ENCODE measurements at regions of chr20 and their contacts with region 1.

Region 1: DNA sequence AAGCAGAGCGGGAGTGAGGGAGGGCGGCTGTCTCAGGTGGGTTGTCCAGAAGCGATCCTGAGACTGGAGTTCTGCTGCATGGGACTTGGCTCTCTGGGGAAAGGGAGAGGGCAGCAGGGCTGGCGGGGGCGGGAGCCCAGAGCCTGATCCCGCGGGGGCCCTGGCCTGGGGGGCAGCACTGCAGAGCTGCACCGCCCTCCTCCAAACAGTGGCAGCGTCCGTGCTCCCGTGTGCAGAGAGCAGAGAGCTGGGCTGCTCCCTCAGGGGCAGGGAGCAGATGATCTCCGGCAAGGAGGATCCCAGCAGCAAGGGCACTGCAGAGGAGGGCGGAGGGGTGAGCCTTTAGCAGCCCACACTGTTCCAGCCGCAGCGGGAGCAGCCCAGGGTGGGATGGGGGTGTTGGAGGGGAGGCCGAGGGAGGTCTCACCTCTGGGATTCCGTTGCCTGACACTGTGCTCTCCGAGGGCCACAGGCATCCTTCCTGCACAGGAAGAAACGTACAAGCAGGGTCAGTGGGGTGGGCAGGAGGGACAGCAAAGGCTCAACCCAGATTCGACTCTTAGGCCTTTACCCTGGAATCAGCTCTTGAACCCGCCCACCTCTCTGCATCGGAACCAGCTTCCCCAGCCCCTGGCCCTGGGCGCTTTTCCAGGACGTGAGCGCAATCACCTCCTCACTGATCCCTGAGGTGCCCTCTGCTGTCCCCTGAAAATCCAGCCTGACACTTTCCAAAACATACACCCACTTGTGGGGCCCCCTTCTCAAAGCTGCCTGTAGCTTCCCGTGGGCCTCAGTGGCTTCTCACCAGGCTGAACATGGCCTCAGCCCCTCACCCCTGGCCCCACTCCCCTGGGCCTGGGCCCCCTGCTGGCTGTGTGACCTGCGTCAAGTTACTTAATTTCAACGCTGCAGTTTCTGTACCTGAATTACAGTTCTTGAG is 32.6 kb upstream of the ZBP1 start:
- DNase-seq: peak in 1 of 2 donors; percentile 38
- H3K4me3 ChIP-seq: no peak overlapping the region
- H3K27ac ChIP-seq: no peak overlapping the region
- H3K4me1 ChIP-seq: no peaks in the 10 kb centered on the region
- H3K27me3 ChIP-seq: no peaks in the 10 kb centered on the region
- CTCF ChIP-seq: no peak
- POLR2A ChIP-seq: no peak

Region 2: DNA sequence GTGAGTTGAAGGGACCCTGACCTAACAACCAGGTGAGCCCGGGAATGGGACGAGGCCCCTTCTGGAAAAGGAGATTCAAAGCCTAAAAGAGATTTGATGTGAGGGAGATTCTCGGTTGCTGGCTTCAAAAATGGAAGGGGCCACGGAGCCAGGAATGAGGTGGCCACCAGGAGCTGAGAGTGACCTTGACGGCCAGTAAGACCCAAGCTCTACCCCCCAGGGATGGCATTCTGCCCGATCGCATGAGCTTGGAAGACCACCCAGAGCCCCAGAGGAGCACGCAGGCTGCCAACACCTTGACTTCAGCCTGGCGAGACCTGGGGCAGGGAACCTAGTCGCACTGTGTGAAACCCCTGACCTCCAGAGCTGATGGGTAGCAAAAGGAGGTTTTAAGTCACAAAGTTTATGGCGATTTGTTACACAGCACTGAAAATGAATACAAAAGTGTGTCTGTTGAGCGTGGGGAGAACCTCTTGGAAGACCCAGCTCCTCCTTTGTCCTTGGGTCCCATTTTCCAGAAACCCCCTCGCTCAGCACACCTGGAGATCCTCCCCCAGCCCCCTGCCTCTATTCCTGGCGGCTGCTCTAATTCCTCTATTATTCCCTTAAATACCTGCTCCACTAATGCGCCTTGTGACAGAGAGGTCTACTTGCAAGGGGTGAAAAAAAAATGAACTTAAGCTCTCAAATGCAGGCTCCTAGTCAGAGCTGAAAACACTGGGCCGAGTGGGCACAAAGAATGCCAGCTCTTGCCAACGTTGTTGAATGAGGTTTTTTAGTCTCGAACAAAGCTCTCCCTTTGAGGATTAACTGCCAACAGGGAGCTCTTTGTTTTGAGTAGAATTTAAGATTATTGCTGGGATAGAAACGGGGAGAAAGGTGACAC is 550.1 kb before region 1 on chr20:
- intact Hi-C with region 1: no loop called
- DNase-seq: peak in 1 of 2 donors; percentile 77
- H3K4me3 ChIP-seq: no peak overlapping the region
- H3K27ac ChIP-seq: peak overlapping the region; percentile 80 to 83
- H3K4me1 ChIP-seq: no peaks in the 10 kb centered on the region
- H3K27me3 ChIP-seq: no peaks in the 10 kb centered on the region
- CTCF ChIP-seq: no peak
- POLR2A ChIP-seq: no peak

Region 3: GRCh38 chr20:57691752-57692151 is 38.9 kb after region 1 on chr20:
- intact Hi-C with region 1: loop called (anchors 1 kb)
- DNase-seq: no peak
- H3K4me3 ChIP-seq: no peak overlapping the region
- H3K27ac ChIP-seq: no peak overlapping the region
- H3K4me1 ChIP-seq: peaks cover 0 to 39% of the 10 kb centered on the region in 2 donors
- H3K27me3 ChIP-seq: no peaks in the 10 kb centered on the region
- CTCF ChIP-seq: no peak
- POLR2A ChIP-seq: no peak